A673 (cell line): ENCODE measurements at regions of chr3 and their contacts with region 1.

Region 1: DNA sequence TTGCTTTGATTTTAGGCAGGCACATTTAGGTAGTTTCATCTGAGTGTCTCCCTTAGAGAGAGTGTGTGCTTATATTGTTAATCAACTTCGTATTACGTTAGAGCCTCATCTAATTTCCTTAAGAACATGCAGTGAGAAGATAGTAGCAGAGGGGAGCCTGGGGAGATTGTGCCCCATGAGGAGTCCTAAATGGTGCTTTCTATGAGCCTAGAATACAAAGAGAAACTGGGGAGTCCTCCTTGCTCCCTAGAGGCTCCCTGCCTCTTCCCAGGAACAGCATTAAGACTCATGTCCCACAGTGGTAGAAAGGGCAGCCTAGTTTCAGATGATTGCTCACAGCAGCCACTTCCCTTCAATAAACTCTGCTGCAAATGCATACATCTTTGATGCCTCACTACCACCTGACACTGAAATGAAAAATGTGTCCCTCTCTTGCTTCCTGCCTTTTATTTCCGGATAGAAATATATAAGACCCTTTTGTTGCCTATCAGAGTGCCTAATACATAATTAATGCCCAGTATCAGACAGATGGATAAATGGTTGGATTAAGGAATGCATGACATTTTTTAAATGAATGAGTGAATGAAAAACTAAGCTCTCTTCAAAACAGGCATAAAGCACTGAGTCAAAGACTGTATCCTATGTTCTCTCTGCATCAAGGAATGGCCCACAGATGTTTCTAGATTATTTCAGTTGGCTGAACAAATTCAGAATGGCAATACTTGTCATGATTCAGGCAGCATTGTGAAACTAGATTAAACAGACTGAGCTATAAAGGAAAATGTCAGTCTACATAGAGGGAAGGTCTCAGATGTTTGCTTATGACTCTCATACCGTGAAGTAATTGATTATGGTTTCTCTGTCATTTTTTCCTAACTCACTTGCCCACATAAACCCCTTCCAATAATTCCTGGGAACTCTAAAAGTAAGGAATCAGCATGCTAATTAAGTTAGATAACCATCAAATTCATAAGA is 362.1 kb downstream of the LRRC3B start:
- DNase-seq: peak; percentile 80
- H3K4me3 ChIP-seq: no peak overlapping the region
- H3K27ac ChIP-seq: peak overlapping the region; percentile 52
- H3K4me1 ChIP-seq: peaks cover 15% of the 10 kb centered on the region
- H3K27me3 ChIP-seq: no peaks in the 10 kb centered on the region
- CTCF ChIP-seq: no peak

Region 2: GRCh38 chr3:27025718-27026117 is 41.0 kb after region 1 on chr3:
- CTCF ChIA-PET with region 1: no interaction called
- POLR2A ChIA-PET with region 1: no interaction called
- intact Hi-C with region 1: loop called (anchors 2 kb)
- DNase-seq: peak; percentile 93
- H3K4me3 ChIP-seq: no peak overlapping the region
- H3K27ac ChIP-seq: peak overlapping the region; percentile 59
- H3K4me1 ChIP-seq: peaks cover 19% of the 10 kb centered on the region
- H3K27me3 ChIP-seq: no peaks in the 10 kb centered on the region
- CTCF ChIP-seq: no peak

Region 3: GRCh38 chr3:27244374-27244773 is 259.7 kb after region 1 on chr3:
- CTCF ChIA-PET with region 1: no interaction called
- POLR2A ChIA-PET with region 1: no interaction called
- intact Hi-C with region 1: no loop called
- DNase-seq: no peak
- H3K4me3 ChIP-seq: no peak overlapping the region
- H3K27ac ChIP-seq: no peak overlapping the region
- H3K4me1 ChIP-seq: no peaks in the 10 kb centered on the region
- H3K27me3 ChIP-seq: no peaks in the 10 kb centered on the region
- CTCF ChIP-seq: no peak